AG04449 (cell line): ENCODE measurements at regions of chr13 and their contacts with region 1.

Region 1: GRCh38 chr13:93248627-93249047 is 22.0 kb downstream of the GPC6 start:
- DNase-seq: no peak
- H3K4me3 ChIP-seq: no peak overlapping the region
- CTCF ChIP-seq: peak; percentile 85

Region 2: GRCh38 chr13:93259527-93260080 is 11.0 kb after region 1 on chr13:
- CTCF ChIA-PET with region 1: interaction called, 11 read pairs
- POLR2A ChIA-PET with region 1: no interaction called
- DNase-seq: no peak
- H3K4me3 ChIP-seq: no peak overlapping the region
- CTCF ChIP-seq: no peak

Region 3: GRCh38 chr13:94362411-94362909 is 1113.8 kb after region 1 on chr13:
- CTCF ChIA-PET with region 1: interaction called, 17 read pairs
- POLR2A ChIA-PET with region 1: no interaction called
- DNase-seq: peak; percentile 70
- H3K4me3 ChIP-seq: no peak overlapping the region
- CTCF ChIP-seq: peak; percentile 71